Caco-2 (cell line): ENCODE measurements at regions of chr20 and their contacts with region 1.

Region 1: GRCh38 chr20:55140631-55141030 is 665.2 kb downstream of the DOK5 start:
- DNase-seq: no peak
- H3K4me3 ChIP-seq: no peak overlapping the region
- H3K4me3 Mint-ChIP-seq: no peak overlapping the region
- H3K27ac Mint-ChIP-seq: no peak overlapping the region
- H3K4me1 ChIP-seq: no peaks in the 10 kb centered on the region; the same call in 1 of the 2 replicates
- H3K4me1 Mint-ChIP-seq: no peaks in the 10 kb centered on the region
- H3K27me3 ChIP-seq: no peaks in the 10 kb centered on the region
- H3K27me3 Mint-ChIP-seq: peaks cover 2% of the 10 kb centered on the region
- CTCF ChIP-seq: no peak

Region 2: GRCh38 chr20:54759692-54760145 is 380.9 kb before region 1 on chr20:
- CTCF ChIA-PET with region 1: no interaction called
- POLR2A ChIA-PET with region 1: no interaction called
- intact Hi-C with region 1: loop called (anchors 10 kb)
- DNase-seq: no peak
- H3K4me3 ChIP-seq: no peak overlapping the region
- H3K4me3 Mint-ChIP-seq: no peak overlapping the region
- H3K27ac Mint-ChIP-seq: no peak overlapping the region
- H3K4me1 ChIP-seq: no peaks in the 10 kb centered on the region
- H3K4me1 Mint-ChIP-seq: no peaks in the 10 kb centered on the region
- H3K27me3 ChIP-seq: no peaks in the 10 kb centered on the region
- H3K27me3 Mint-ChIP-seq: peaks cover 9% of the 10 kb centered on the region
- CTCF ChIP-seq: no peak

Region 3: DNA sequence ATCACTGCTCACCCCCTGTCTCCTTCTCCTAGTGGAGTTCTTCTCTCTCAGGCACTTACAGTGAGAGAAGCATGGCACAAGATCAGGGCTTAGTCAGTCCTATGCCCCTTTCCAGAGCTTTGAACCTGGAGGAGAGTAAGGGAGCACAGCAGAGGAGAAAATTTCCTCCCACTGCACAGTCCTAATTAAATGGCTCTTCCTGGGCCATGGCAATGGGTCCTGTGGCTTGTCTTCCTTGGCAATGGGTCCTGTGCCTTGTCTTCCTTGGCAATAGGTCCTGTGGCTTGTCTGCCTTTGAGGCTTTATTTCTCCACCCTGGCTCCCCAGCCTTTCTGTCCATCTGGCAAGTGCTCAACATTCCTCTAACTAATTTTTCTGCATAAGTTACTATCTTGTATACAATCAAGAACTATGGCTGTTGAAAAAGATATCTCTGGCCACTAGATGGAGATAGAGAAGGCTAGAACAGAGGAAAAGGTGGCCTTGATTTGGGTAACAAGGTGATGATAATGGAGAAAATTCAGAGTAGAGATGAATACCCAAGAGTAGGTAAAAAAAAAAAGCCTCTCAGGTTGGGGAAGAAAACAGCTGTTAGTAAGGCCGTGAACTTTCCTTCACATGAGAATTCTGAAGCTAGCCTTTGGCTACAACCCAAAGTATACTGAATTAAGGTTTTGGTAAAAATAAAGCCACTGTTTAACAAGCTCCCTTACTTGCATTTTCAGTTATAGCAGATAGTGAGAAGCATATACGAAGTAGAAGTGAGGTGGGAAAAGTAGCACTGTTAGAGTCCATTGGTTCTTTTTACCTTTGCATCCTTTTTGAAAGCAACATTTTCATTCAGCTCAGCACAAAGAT is 160.3 kb before region 1 on chr20:
- CTCF ChIA-PET with region 1: no interaction called
- POLR2A ChIA-PET with region 1: no interaction called
- intact Hi-C with region 1: loop called (anchors 10 kb)
- DNase-seq: peak in 1 of 2 experiments; percentile 53
- H3K4me3 ChIP-seq: no peak overlapping the region
- H3K4me3 Mint-ChIP-seq: no peak overlapping the region
- H3K27ac Mint-ChIP-seq: no peak overlapping the region
- H3K4me1 ChIP-seq: no peaks in the 10 kb centered on the region
- H3K4me1 Mint-ChIP-seq: no peaks in the 10 kb centered on the region
- H3K27me3 ChIP-seq: no peaks in the 10 kb centered on the region
- H3K27me3 Mint-ChIP-seq: peaks cover 6% of the 10 kb centered on the region
- CTCF ChIP-seq: peak; percentile 64 to 66